Transverse colon (tissue), 4 donors: ENCODE measurements at regions of chr6 and their contacts with region 1.

Region 1: DNA sequence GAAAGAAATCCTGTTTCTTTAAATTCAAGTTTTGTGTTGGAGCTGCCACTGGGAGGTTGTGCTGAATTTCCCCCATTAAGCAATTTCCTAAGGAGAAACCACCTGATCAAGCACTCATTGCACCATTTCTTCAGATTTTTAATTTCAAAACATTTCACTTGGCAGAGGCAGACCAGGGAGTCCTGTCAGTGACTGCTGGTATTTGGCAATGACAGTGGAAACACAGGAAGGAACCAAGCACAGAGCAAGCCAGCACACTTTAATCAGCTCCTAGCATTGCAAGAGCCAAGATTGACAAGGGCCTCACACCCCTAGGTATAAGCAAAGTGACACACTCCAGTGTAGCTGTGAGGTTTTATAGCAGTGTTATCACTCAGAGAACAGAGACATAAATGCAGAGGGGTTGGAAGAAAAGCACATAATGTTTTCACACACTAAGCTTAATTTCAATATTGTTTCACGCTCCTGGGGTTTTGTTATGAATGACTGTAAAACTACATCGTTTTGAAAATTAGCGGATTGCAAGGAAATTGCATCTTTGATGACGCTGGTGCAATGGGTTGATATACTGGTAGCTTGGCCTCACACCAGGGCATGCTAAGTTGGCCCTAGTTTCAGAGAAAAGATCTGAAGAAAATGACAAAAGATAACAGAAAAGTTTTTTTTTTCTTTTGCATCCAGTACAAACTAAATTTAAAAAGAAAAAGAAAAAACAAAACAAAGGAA is 768.4 kb downstream of the TFAP2A start:
- DNase-seq: no peak
- H3K4me3 ChIP-seq: no peak overlapping the region
- H3K27ac ChIP-seq: no peak overlapping the region
- H3K4me1 ChIP-seq: no peaks in the 10 kb centered on the region
- H3K27me3 ChIP-seq: no peaks in the 10 kb centered on the region
- CTCF ChIP-seq: no peak
- EP300 ChIP-seq: no peak
- POLR2A ChIP-seq: no peak

Region 2: DNA sequence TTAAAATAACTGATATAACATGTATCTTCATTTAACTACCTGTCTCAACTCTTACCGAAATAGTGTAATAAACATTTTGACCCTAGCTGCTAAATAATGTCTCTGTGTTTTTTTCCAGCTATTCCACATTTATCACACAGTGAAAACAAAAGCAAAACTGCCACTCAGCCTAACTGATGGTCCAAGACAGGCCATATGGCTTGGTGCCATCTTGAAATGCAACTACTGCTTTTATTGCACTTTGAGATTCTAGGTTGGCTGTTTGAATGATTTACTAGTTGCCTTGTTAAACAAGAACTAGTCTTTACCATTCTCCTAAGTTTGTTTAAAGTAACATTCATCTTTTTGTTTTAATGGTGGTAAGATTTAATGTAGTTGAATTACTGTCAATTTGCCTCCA is 28.6 kb after region 1 on chr6:
- in situ Hi-C with region 1: no loop called
- intact Hi-C with region 1: loop called (anchors 1 kb)
- DNase-seq: no peak
- H3K4me3 ChIP-seq: no peak overlapping the region
- H3K27ac ChIP-seq: no peak overlapping the region
- H3K4me1 ChIP-seq: no peaks in the 10 kb centered on the region
- H3K27me3 ChIP-seq: no peaks in the 10 kb centered on the region
- CTCF ChIP-seq: no peak
- EP300 ChIP-seq: no peak
- POLR2A ChIP-seq: no peak

Region 3: GRCh38 chr6:10759312-10759839 is 1112.9 kb after region 1 on chr6:
- in situ Hi-C with region 1: no loop called
- intact Hi-C with region 1: no loop called
- DNase-seq: no peak
- H3K4me3 ChIP-seq: no peak overlapping the region
- H3K27ac ChIP-seq: no peak overlapping the region
- H3K4me1 ChIP-seq: no peaks in the 10 kb centered on the region
- H3K27me3 ChIP-seq: no peaks in the 10 kb centered on the region
- CTCF ChIP-seq: peak; percentile 21 to 47 (median 42)
- EP300 ChIP-seq: no peak
- POLR2A ChIP-seq: no peak